GM12878 (cell line): ENCODE measurements at regions of chr15 and their contacts with region 1.

Region 1: DNA sequence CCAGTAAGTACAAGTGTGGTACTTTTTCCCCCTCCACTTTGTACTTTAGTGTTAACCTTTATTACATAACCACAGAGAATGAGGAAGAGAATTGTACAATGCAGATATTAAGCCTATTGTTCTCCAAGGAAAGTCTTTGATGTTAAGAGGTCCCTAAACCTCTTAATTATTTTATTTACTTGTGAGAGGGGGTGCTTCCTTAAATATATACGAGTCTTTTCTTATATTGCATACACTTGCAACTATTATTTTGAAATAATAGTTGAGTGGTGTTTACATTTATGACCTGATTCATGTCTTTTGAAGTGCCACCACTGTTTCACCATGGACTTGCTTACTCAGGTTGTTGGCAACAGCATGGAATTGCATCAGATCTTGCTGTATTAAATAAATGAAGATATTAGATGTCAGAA is 10.1 kb downstream of the USP3 start:
- DNase-seq: no peak
- ATAC-seq: 0 out of 3 replicates have a peak, but pooled peaks have one; percentile 12
- H3K4me3 ChIP-seq: 0 out of 2 replicates have a peak overlapping the region, but pooled peaks have one; percentile 21
- H3K27ac ChIP-seq: peak overlapping the region; percentile 67; the same call in 1 of the 2 replicates
- H3K4me1 ChIP-seq: peaks cover 45% of the 10 kb centered on the region
- H3K27me3 ChIP-seq: no peaks in the 10 kb centered on the region
- CTCF ChIP-seq: no peak
- EP300 ChIP-seq: no peak
- POLR2A ChIP-seq: no peak
- RAD21 ChIP-seq: no peak

Region 2: DNA sequence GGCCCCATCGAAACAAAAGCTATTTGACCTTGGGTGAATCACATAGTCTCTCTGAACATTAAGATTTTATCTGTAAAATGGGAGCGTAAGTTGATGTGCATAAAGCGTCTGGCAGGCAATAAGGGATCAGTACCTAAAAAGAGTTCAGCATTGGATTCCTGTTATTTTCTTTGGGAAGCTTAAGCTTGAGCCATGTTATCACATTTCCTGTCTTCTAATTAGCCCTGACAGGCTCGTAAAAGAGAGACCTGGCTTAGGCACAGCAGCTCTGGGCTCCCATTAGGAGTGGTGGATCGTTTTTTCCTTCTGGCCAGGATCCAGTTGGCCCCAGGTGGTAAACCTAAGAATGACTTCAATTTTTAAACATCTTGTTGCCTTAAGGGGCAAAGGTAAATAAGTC is 106.9 kb before region 1 on chr15:
- CTCF ChIA-PET with region 1: no interaction called
- POLR2A ChIA-PET with region 1: no interaction called
- RAD21 ChIA-PET with region 1: no interaction called
- SMC1A ChIA-PET with region 1: no interaction called
- in situ Hi-C with region 1: no loop called
- intact Hi-C with region 1: no loop called
- DNase-seq: no peak
- ATAC-seq: no peak
- H3K4me3 ChIP-seq: no peak overlapping the region
- H3K27ac ChIP-seq: no peak overlapping the region
- H3K4me1 ChIP-seq: no peaks in the 10 kb centered on the region
- H3K27me3 ChIP-seq: no peaks in the 10 kb centered on the region
- CTCF ChIP-seq: no peak
- EP300 ChIP-seq: no peak
- POLR2A ChIP-seq: no peak
- RAD21 ChIP-seq: no peak

Region 3: DNA sequence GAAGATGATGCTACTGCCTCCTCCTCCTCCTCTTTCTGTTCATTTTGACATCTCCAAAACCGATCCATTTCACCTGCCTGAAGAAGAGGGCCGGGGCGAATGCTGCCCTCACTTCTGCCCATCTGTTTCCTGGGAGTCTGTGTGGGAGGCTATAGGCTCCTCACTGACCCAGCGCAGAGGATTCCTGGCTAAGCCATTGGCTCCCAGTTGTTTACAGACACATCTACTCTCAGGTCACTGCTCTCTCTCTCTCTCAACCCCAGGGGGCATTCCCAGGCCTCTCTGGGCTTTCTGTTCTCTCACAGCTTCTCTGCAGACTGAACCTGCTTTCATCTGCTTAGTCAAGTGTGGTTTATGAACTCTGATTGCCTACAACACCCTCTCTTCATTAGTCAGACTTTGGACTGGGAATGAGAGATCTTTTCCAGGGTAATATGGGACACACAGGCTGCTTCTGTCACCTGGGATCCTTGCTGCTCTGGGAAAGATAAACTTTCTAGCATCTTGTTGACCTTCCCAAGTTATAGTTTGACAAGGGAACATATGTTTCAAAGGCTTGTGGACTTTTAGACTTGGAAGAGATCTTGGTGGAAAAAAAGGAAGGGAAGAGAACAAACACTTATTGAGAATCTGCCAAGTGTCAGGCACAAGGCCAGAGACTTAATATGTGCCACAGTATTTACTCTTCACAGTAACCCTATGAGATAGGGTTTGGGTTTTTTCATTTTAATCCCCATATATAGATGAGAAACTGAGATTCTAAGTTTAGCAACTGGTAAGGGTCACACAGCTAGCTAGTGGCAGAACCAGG is 40.3 kb before region 1 on chr15:
- CTCF ChIA-PET with region 1: interaction called, 9 read pairs
- POLR2A ChIA-PET with region 1: interaction called, 9 read pairs
- RAD21 ChIA-PET with region 1: interaction called, 17 read pairs
- SMC1A ChIA-PET with region 1: interaction called, 13 read pairs
- in situ Hi-C with region 1: no loop called
- intact Hi-C with region 1: no loop called
- DNase-seq: peak; percentile 97
- ATAC-seq: peak; percentile 80
- H3K4me3 ChIP-seq: peak overlapping the region; percentile 59
- H3K27ac ChIP-seq: peak overlapping the region; percentile 100
- H3K4me1 ChIP-seq: peaks cover 62% of the 10 kb centered on the region
- H3K27me3 ChIP-seq: no peaks in the 10 kb centered on the region
- CTCF ChIP-seq: no peak
- EP300 ChIP-seq: peak; percentile 52 to 74; a peak in 2 of 4 replicates
- POLR2A ChIP-seq: no peak; the same call in 1 of the 2 replicates
- RAD21 ChIP-seq: peak; percentile 40; the same call in 1 of the 2 replicates

Region 4: DNA sequence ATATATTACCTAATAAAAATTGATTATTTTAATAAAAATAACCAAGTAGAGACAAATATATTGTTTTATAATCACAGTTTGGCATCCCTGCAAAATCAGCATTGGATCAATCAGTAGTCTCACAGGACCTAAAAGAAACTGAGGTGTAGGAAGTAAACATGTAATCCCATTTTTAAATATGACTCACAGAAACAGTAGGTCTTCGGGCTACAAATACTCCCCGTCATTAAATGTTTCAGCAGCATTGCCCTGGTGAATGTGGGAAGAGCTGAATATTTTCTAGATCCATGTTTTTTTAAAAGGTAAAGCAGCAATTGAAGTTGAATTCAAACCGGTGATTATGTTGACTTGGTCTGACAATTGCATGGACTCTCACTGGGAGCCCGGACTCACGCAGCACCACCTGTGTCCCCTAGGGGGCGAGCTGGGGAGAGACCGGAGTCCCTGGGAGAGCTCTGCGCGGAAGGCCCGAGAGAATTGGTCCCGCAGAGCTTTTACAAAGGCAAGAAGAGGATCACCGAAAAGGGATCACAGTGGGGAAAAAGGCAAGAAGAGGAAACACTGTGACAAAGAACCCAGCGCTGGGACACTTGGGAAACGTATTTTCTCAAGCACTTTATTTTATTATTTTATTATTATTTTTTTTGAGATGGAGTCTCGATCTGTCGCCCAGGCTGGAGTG is 27.3 kb before region 1 on chr15:
- CTCF ChIA-PET with region 1: interaction called, 11 read pairs
- POLR2A ChIA-PET with region 1: interaction called, 14 read pairs
- RAD21 ChIA-PET with region 1: interaction called, 11 read pairs
- SMC1A ChIA-PET with region 1: interaction called, 19 read pairs
- in situ Hi-C with region 1: no loop called
- intact Hi-C with region 1: no loop called
- DNase-seq: no peak
- ATAC-seq: peak; percentile 74
- H3K4me3 ChIP-seq: peak overlapping the region; percentile 42; the same call in 1 of the 2 replicates
- H3K27ac ChIP-seq: peak overlapping the region; percentile 89
- H3K4me1 ChIP-seq: peaks cover 57% of the 10 kb centered on the region
- H3K27me3 ChIP-seq: no peaks in the 10 kb centered on the region
- CTCF ChIP-seq: peak; percentile 84 to 98 (median 97)
- EP300 ChIP-seq: no peak
- POLR2A ChIP-seq: no peak
- RAD21 ChIP-seq: peak; percentile 82

Region 5: GRCh38 chr15:63531586-63531985 is 17.0 kb after region 1 on chr15:
- CTCF ChIA-PET with region 1: interaction called, 10 read pairs
- POLR2A ChIA-PET with region 1: interaction called, 20 read pairs
- RAD21 ChIA-PET with region 1: interaction called, 43 read pairs
- SMC1A ChIA-PET with region 1: interaction called, 130 read pairs
- in situ Hi-C with region 1: no loop called
- intact Hi-C with region 1: no loop called
- DNase-seq: no peak
- ATAC-seq: peak; percentile 10; the same call in 1 of the 3 replicates
- H3K4me3 ChIP-seq: no peak overlapping the region
- H3K27ac ChIP-seq: no peak overlapping the region
- H3K4me1 ChIP-seq: peaks cover 51% of the 10 kb centered on the region
- H3K27me3 ChIP-seq: no peaks in the 10 kb centered on the region
- CTCF ChIP-seq: peak in 2 of 3 experiments; percentile 21 to 39; a peak in 2 of 6 replicates
- EP300 ChIP-seq: no peak
- POLR2A ChIP-seq: no peak
- RAD21 ChIP-seq: no peak

Region 6: GRCh38 chr15:63553388-63553791 is 38.9 kb after region 1 on chr15:
- CTCF ChIA-PET with region 1: interaction called, 3 read pairs
- POLR2A ChIA-PET with region 1: interaction called, 4 read pairs
- RAD21 ChIA-PET with region 1: interaction called, 10 read pairs
- SMC1A ChIA-PET with region 1: interaction called, 19 read pairs
- in situ Hi-C with region 1: no loop called
- intact Hi-C with region 1: no loop called
- DNase-seq: no peak
- ATAC-seq: peak; percentile 47
- H3K4me3 ChIP-seq: no peak overlapping the region
- H3K27ac ChIP-seq: no peak overlapping the region
- H3K4me1 ChIP-seq: peaks cover 5% of the 10 kb centered on the region
- H3K27me3 ChIP-seq: no peaks in the 10 kb centered on the region
- CTCF ChIP-seq: no peak
- EP300 ChIP-seq: no peak
- POLR2A ChIP-seq: no peak
- RAD21 ChIP-seq: no peak